Heart right ventricle (tissue), 16 donors: ENCODE measurements at regions of chr11 and their contacts with region 1.

Region 1: DNA sequence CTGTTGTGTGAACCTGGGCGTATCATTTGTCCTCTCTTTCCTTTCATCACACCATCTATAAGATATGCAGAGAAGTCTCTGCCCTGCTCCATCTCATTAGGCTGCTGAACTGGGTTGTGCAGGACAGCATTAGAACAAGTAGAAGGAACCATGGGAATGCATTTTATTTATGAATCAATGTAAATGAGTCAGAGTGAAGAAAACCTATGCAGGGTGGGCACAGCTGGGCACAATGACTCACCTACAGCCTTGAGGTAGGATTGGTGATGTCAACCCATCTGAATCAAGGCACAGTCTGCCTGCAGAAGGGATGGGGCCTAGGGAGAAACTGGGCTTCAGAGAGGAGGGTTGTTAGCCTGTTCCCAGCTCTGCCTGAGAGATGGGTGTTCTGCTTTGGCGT is 123.4 kb downstream of the CSNK2A3 start:
- DNase-seq: no peak
- ATAC-seq: no peak
- H3K4me3 ChIP-seq: no peak overlapping the region
- H3K27ac ChIP-seq: no peak overlapping the region
- H3K4me1 ChIP-seq: peaks cover 0 to 20% (median 14%) of the 10 kb centered on the region in 9 donors
- H3K27me3 ChIP-seq: peaks cover 0 to 4% (median 0%) of the 10 kb centered on the region in 7 donors
- CTCF ChIP-seq: no peak

Region 2: DNA sequence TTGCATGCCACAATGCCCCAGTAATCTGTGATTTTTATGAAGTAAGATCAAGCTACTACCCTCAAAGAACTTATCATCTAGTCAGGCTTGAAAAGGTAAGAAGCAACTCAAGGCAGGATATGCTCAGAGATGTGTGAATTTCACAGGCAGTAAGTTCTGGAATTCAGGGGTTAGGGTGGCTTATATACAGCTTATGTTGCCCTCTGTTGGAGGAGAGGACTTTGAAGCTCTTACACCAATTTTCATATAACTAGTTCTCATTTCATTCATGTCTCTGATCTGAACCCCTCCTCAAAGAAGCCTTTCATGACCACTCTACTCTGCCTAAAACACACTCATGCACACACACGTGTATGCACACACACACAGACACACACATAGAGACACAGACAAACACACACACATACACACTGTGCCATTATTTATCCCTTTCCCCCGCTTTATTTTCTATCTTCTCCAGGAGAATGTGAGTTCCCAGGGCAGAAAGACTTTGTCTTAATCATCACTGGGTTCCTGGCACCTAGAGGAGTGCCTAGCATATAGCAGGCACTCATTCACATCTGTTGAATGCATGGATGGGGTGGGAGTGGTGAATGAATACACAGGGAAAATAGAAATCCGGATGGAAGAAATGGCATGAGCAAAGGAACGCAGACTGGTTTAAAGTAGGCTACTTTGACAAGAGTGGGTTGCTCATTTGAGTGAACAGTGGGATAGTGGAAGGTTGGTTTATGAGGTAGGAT is 151.1 kb before region 1 on chr11:
- intact Hi-C with region 1: loop called in 1 of 10 experiments (anchors 10 kb)
- DNase-seq: no peak
- ATAC-seq: no peak
- H3K4me3 ChIP-seq: no peak overlapping the region
- H3K27ac ChIP-seq: no peak overlapping the region
- H3K4me1 ChIP-seq: peaks cover 0 to 6% (median 0%) of the 10 kb centered on the region in 9 donors
- H3K27me3 ChIP-seq: no peaks in the 10 kb centered on the region
- CTCF ChIP-seq: no peak